ENCODE measurements at regions of chr5 and their contacts with region 1.

Region 1: DNA sequence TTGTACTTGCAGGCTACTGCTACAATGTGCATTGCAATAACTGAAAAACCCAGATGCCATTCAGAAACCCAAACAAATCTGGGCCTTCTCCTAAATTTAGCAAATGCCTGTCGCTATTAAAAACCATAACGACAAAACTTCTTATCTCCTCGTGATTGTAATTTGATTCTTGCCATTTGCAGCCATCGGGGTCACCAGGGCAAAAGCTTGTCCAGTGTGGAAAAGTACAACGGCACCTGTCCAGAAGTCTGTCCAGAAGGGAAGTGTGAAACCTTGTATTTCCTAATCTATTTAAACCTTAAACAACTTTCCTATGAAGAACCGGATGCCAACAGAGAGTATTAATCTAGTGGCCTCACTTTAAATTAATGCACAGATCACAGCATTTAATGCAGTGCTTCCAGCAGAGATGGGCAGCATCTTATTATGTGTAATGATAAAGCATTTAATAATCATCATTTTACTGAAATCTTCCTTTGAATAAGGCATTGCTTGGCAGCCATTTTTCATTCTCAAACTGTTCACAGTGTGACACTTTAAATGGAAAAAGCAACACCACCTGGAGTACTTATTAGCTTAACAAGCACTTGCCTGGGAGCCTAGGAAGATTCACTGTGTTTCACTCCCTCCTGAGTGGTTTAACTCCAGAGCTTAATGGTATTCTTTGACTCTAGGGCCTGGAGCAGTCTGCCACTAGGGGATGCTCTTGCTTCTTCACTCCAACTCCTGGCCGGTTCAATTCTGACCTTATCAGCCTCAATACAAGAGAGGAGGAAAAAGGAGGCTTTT is 4.9 kb upstream of the C7 start:
- DNase-seq: peak; percentile 90
- ATAC-seq: peak; percentile 96
- H3K4me3 ChIP-seq: no peak overlapping the region
- H3K27ac ChIP-seq: no peak overlapping the region
- H3K4me1 ChIP-seq: peaks cover 20% of the 10 kb centered on the region
- H3K27me3 ChIP-seq: no peaks in the 10 kb centered on the region
- CTCF ChIP-seq: peak; percentile 99

Region 2: DNA sequence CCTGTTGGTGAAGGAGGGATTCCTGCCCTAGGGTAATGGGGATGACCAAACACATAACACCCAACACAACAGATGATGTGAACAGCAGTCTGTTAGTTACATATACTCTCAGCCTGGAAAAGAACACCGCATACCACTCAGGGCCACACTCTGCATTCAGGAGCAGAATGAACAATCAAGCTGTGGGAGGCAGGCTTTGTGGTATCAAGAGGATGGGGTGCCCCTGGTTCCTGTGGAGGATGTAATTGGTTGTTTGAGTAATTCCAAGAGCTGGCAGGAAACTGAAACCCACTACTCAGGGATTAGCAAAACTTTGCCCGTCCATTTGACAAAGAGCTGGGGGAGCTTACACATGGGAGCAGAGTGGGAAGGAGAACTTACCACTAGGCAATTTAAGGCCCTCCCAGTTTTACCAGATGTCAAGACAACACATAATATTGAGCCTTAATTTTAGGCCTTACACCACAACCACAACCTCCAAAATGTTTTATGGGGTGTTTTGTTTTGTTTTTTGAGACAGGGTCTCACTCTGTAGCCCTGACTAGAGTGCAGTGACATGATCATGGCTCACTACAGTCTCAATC is 90.6 kb before region 1 on chr5:
- CTCF ChIA-PET with region 1: no interaction called
- POLR2A ChIA-PET with region 1: no interaction called
- intact Hi-C with region 1: no loop called
- DNase-seq: no peak
- ATAC-seq: no peak
- H3K4me3 ChIP-seq: no peak overlapping the region
- H3K27ac ChIP-seq: no peak overlapping the region
- H3K4me1 ChIP-seq: peaks cover 2% of the 10 kb centered on the region
- H3K27me3 ChIP-seq: no peaks in the 10 kb centered on the region
- CTCF ChIP-seq: no peak

Region 3: DNA sequence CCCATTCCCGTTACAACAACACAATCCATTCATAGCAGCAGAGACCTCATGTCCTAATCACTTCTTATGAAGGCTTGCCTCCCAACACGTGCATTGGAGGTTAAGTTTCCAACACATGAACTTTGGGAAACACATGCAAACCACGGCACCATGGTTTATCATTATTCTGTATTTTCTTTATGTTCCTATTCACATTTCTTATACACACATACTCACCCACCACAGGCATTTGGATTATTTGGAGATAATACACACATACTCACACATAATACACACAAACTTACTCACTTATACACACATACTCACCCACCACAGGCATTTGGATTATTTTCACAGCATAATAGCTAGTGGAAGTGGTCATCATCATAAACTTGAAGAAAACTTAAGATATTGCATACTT is 80.5 kb after region 1 on chr5:
- CTCF ChIA-PET with region 1: no interaction called
- POLR2A ChIA-PET with region 1: interaction called, 8 read pairs
- intact Hi-C with region 1: loop called (anchors 5 kb)
- DNase-seq: peak; percentile 96
- ATAC-seq: peak; percentile 96
- H3K4me3 ChIP-seq: no peak overlapping the region
- H3K27ac ChIP-seq: peak overlapping the region; percentile 73
- H3K4me1 ChIP-seq: peaks cover 58% of the 10 kb centered on the region
- H3K27me3 ChIP-seq: no peaks in the 10 kb centered on the region
- CTCF ChIP-seq: no peak

Region 4: GRCh38 chr5:41115281-41115680 is 210.9 kb after region 1 on chr5:
- CTCF ChIA-PET with region 1: interaction called, 6 read pairs
- POLR2A ChIA-PET with region 1: no interaction called
- intact Hi-C with region 1: loop called (anchors 1 kb)
- DNase-seq: peak; percentile 51
- ATAC-seq: no peak
- H3K4me3 ChIP-seq: no peak overlapping the region
- H3K27ac ChIP-seq: no peak overlapping the region
- H3K4me1 ChIP-seq: 0 out of 2 replicates have a peak, but pooled peaks cover 5% of the 10 kb centered on the region
- H3K27me3 ChIP-seq: no peaks in the 10 kb centered on the region
- CTCF ChIP-seq: no peak

Region 5: DNA sequence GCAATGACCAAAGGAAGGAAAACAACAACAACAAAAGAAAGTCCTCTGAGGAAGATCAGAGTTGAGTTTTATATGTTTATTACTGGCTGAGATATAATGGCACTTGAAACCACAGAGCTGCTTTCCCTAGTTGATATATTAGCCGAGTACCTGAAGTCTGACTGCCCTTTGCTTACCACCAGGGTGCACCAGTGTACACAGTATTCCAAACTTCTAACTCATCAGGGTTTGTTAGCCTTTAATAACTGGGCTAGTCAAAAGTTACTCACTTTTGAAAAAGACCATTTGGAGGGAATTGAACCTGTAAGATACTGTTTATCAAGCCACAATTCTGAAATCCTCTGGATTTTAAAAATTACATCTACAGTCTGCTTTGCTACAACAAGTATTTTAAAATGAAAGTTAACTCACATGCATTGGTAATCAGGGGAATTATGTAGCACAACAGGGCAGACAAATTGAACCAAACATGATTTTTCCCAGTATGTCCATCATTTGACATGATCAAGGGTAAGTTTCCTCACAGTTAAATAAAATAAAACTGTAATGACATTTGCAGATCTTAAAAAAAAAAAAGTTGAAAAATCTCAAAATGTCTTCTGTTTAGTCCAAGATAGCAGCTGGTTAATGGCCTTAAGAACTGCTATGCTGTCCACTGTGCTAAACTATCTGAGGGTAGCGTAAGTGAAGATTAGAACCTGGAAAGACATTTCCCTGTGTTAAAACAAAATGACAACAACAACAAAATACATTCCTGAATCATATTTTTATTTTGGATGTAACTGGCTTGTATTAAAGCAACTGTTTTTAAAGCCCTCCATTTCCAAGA is 366.2 kb after region 1 on chr5:
- CTCF ChIA-PET with region 1: interaction called, 7 read pairs
- POLR2A ChIA-PET with region 1: no interaction called
- intact Hi-C with region 1: loop called (anchors 1 kb)
- DNase-seq: peak; percentile 85
- ATAC-seq: peak; percentile 96
- H3K4me3 ChIP-seq: no peak overlapping the region
- H3K27ac ChIP-seq: no peak overlapping the region
- H3K4me1 ChIP-seq: peaks cover 4% of the 10 kb centered on the region; the same call in 1 of the 2 replicates
- H3K27me3 ChIP-seq: no peaks in the 10 kb centered on the region
- CTCF ChIP-seq: peak; percentile 97

Region 6: DNA sequence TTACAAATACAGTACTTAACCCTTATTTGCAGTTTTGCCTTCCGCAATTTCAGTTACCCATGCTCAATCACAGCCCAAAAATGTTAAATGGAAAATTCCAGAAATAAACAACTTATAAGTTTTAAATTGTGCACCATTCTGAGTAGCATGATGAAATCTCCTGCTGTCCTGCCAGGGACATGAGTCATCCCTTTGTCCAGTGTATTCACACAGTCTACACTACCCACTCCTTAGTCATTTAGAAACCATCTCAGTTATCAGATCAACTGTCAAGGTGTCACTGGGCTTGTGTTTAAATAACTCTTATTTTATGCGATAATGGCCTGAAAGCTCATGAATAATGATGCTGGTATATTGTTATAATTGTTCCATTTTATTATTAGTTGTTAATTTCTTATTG is 510.2 kb after region 1 on chr5:
- CTCF ChIA-PET with region 1: no interaction called
- POLR2A ChIA-PET with region 1: no interaction called
- intact Hi-C with region 1: loop called (anchors 10 kb)
- DNase-seq: peak; percentile 98
- ATAC-seq: peak; percentile 68
- H3K4me3 ChIP-seq: no peak overlapping the region
- H3K27ac ChIP-seq: peak overlapping the region; percentile 91
- H3K4me1 ChIP-seq: peaks cover 83% of the 10 kb centered on the region
- H3K27me3 ChIP-seq: no peaks in the 10 kb centered on the region
- CTCF ChIP-seq: no peak

Region 7: GRCh38 chr5:41641621-41642020 is 737.2 kb after region 1 on chr5:
- CTCF ChIA-PET with region 1: interaction called, 12 read pairs
- POLR2A ChIA-PET with region 1: no interaction called
- intact Hi-C with region 1: loop called (anchors 2 kb)
- DNase-seq: peak; percentile 52
- ATAC-seq: no peak
- H3K4me3 ChIP-seq: no peak overlapping the region
- H3K27ac ChIP-seq: no peak overlapping the region
- H3K4me1 ChIP-seq: no peaks in the 10 kb centered on the region
- H3K27me3 ChIP-seq: no peaks in the 10 kb centered on the region
- CTCF ChIP-seq: peak; percentile 82